ENCODE measurements at regions of chr4 and their contacts with region 1.

Region 1: GRCh38 chr4:101419324-101420135 is 72.2 kb upstream of the PPP3CA start:
- DNase-seq: no peak
- H3K4me3 ChIP-seq: no peak overlapping the region
- H3K27ac ChIP-seq: no peak overlapping the region
- H3K4me1 ChIP-seq: no peaks in the 10 kb centered on the region
- H3K27me3 ChIP-seq: no peaks in the 10 kb centered on the region
- CTCF ChIP-seq: no peak

Region 2: GRCh38 chr4:101393250-101393649 is 26.3 kb before region 1 on chr4:
- intact Hi-C with region 1: loop called (anchors 2 kb)
- DNase-seq: no peak
- H3K4me3 ChIP-seq: no peak overlapping the region
- H3K27ac ChIP-seq: no peak overlapping the region
- H3K4me1 ChIP-seq: no peaks in the 10 kb centered on the region
- H3K27me3 ChIP-seq: no peaks in the 10 kb centered on the region
- CTCF ChIP-seq: no peak

Region 3: DNA sequence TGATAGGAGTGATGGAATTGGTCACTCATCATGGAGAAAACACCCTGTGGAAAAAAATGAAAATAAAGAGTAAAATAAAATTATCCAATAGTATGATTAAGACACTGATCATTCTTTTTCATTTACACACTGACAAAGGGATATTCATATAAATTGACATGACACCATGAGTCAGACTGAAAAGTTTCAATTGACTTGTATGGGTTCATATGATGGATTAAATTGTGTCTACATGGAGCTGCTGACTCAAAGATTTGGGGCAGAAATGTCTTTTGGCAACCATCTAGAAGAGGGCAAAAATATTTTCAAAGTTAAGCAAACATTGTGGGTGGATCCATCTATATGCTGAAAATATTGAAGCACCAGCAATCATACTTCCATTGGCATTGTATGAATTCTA is 81.2 kb after region 1 on chr4:
- intact Hi-C with region 1: no loop called
- DNase-seq: no peak
- H3K4me3 ChIP-seq: no peak overlapping the region
- H3K27ac ChIP-seq: no peak overlapping the region
- H3K4me1 ChIP-seq: no peaks in the 10 kb centered on the region
- H3K27me3 ChIP-seq: no peaks in the 10 kb centered on the region
- CTCF ChIP-seq: no peak

Measured in tibial artery (tissue), 4 donors.